Activated CD4-positive, alpha-beta T cell treated with anti-CD3 and anti-CD28 coated beads for 36 hours (primary cell): ENCODE measurements at regions of chr6 and their contacts with region 1.

Region 1: DNA sequence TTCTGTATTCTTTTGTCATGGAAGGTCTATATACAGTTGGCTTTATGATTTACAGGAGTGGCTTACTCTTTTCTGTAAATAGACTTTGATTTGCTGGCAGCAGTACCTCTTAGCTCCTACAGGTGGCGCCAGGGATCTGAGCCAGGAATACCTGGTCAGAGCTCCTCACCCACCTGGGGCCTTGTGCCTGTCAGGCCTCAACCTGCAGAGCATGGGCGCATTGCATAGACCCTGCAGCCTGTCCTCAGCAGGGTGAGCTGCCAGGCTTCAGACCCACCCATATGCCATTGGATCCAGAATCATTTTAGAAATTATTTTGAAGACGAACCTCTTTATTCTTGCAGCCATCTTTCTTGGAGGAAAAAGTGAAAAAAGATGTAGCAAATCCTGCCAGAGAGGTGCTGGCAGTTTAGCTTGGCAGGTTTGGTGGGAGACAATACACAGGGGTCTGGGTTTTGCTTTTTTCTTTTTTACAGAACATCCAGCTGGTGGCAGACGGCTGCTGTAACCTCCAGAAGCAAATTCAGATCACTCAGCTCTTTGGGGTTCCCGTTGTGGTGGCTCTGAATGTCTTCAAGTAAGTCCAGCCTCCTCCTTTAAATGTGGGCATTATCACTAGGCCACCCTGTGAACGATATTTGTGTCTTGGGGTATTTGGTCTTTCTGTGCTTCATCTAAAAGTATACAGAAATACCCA is 149.1 kb downstream of the MTHFD1L start:
- DNase-seq: peak; percentile 75
- ATAC-seq: peak; percentile 61
- H3K4me3 Mint-ChIP-seq: no peak overlapping the region
- H3K27ac Mint-ChIP-seq: no peak overlapping the region
- H3K4me1 Mint-ChIP-seq: peaks cover 1% of the 10 kb centered on the region
- H3K27me3 Mint-ChIP-seq: no peaks in the 10 kb centered on the region

Region 2: GRCh38 chr6:151004415-151005024 is 10.0 kb before region 1 on chr6:
- CTCF ChIA-PET with region 1: interaction called, 26 read pairs
- POLR2A ChIA-PET with region 1: no interaction called
- intact Hi-C with region 1: no loop called
- DNase-seq: no peak
- ATAC-seq: peak; percentile 80
- H3K4me3 Mint-ChIP-seq: no peak overlapping the region
- H3K27ac Mint-ChIP-seq: peak overlapping the region; percentile 81
- H3K4me1 Mint-ChIP-seq: peaks cover 34% of the 10 kb centered on the region
- H3K27me3 Mint-ChIP-seq: no peaks in the 10 kb centered on the region

Region 3: GRCh38 chr6:151067684-151068596 is 53.4 kb after region 1 on chr6:
- CTCF ChIA-PET with region 1: no interaction called
- POLR2A ChIA-PET with region 1: no interaction called
- intact Hi-C with region 1: no loop called
- DNase-seq: no peak
- ATAC-seq: no peak
- H3K4me3 Mint-ChIP-seq: no peak overlapping the region
- H3K27ac Mint-ChIP-seq: peak overlapping the region; percentile 20
- H3K4me1 Mint-ChIP-seq: no peaks in the 10 kb centered on the region
- H3K27me3 Mint-ChIP-seq: no peaks in the 10 kb centered on the region

Region 4: GRCh38 chr6:151166196-151166595 is 151.6 kb after region 1 on chr6:
- CTCF ChIA-PET with region 1: no interaction called
- POLR2A ChIA-PET with region 1: no interaction called
- intact Hi-C with region 1: no loop called
- DNase-seq: no peak
- ATAC-seq: no peak
- H3K4me3 Mint-ChIP-seq: no peak overlapping the region
- H3K27ac Mint-ChIP-seq: no peak overlapping the region
- H3K4me1 Mint-ChIP-seq: no peaks in the 10 kb centered on the region
- H3K27me3 Mint-ChIP-seq: peaks cover 9% of the 10 kb centered on the region

Region 5: GRCh38 chr6:151310852-151311767 is 296.6 kb after region 1 on chr6:
- CTCF ChIA-PET with region 1: no interaction called
- POLR2A ChIA-PET with region 1: no interaction called
- intact Hi-C with region 1: no loop called
- DNase-seq: no peak
- ATAC-seq: no peak
- H3K4me3 Mint-ChIP-seq: no peak overlapping the region
- H3K27ac Mint-ChIP-seq: no peak overlapping the region
- H3K4me1 Mint-ChIP-seq: no peaks in the 10 kb centered on the region
- H3K27me3 Mint-ChIP-seq: no peaks in the 10 kb centered on the region

Region 6: DNA sequence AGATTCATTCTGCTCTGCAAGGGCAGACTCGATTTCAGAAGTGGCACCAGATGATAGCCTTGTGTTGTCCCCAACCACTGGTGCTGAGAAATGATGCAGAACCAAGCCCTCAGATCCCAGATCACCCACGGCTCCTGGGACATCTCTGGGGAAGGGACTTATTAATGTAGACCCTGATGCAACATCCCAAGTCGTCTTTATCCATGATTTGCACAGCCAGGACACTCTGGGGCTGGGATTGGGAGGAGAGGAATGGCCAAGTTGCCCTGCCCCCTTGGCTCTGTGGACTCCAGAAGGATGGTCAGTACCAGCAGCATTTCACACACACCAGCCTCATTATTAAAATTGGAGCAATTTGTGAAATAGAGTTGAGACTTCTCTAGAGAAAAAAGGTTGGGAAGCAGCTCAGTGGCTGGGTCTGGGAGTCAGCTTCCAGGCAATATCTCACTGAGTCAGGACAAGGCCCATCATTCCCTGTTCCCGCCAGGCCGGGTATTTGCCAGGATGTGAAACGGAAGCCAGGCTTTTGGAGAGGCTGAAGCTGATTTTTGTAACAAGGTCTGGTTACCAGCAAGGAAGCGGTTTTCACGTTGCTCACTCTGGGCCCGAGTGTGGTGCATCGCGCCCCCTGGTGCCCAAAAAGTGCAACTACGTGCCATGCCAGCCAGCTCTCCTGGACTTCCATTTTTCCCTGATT is 309.4 kb after region 1 on chr6:
- CTCF ChIA-PET with region 1: interaction called, 161 read pairs
- POLR2A ChIA-PET with region 1: no interaction called
- intact Hi-C with region 1: loop called (anchors 1 kb)
- DNase-seq: peak; percentile 83
- ATAC-seq: peak; percentile 90
- H3K4me3 Mint-ChIP-seq: no peak overlapping the region
- H3K27ac Mint-ChIP-seq: no peak overlapping the region
- H3K4me1 Mint-ChIP-seq: peaks cover 20% of the 10 kb centered on the region
- H3K27me3 Mint-ChIP-seq: peaks cover 31% of the 10 kb centered on the region

Region 7: GRCh38 chr6:151335930-151336329 is 321.4 kb after region 1 on chr6:
- CTCF ChIA-PET with region 1: interaction called, 23 read pairs
- POLR2A ChIA-PET with region 1: interaction called, 4 read pairs
- intact Hi-C with region 1: loop called (anchors 1 kb)
- DNase-seq: no peak
- ATAC-seq: no peak
- H3K4me3 Mint-ChIP-seq: no peak overlapping the region
- H3K27ac Mint-ChIP-seq: no peak overlapping the region
- H3K4me1 Mint-ChIP-seq: no peaks in the 10 kb centered on the region
- H3K27me3 Mint-ChIP-seq: no peaks in the 10 kb centered on the region